Aorta (tissue), 5 donors: ENCODE measurements at regions of chr9 and their contacts with region 1.

Region 1: GRCh38 chr9:113463418-113464285 is at the start of gene RGS3:
- DNase-seq: peak; percentile 62 to 91
- ATAC-seq: peak; percentile 87
- H3K4me3 ChIP-seq: peak within 1 kb of the TSS; percentile 22 to 62
- H3K27ac ChIP-seq: peak within 1 kb of the TSS; percentile 69 to 73
- H3K4me1 ChIP-seq: no peaks in the 10 kb centered on the region
- H3K27me3 ChIP-seq: no peaks in the 10 kb centered on the region
- total RNA-seq, gene RGS3: 157 to 161 TPM

Region 2: DNA sequence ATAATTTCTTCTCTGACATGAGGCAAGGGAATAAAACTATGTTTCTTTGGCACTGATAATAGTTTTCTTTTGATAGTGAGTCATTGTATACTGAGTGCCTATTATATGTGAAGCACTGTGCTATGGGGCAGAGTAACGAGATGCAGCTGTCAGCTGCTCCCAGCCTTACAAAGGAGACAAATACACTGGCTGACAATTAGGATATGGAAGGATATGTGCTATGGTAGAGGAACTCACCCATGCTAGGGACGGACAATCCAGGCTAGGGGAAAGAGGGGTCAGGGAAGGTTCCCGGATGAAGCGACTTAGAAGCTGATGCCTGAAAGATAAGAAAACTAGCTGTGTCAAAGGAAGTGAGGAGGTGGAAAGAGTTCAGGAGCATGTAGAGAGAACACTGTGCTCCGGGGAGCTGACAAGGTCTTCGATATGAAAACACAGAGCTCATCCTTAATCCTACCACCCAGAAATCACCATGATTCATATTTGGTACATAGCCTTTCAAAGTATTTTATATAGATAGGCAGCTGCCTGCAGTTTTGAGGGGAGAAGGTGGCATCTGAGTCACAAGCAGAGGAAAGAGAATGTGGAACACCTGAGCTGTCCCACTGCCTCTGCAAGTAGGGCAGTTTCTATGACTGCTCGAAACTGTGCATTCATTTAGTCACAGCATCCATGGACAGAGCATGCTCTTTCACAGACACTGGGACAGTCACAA is 102.2 kb before region 1 on chr9:
- intact Hi-C with region 1: no loop called
- DNase-seq: no peak
- ATAC-seq: no peak
- H3K4me3 ChIP-seq: no peak overlapping the region
- H3K27ac ChIP-seq: no peak overlapping the region
- H3K4me1 ChIP-seq: no peaks in the 10 kb centered on the region
- H3K27me3 ChIP-seq: no peaks in the 10 kb centered on the region

Region 3: DNA sequence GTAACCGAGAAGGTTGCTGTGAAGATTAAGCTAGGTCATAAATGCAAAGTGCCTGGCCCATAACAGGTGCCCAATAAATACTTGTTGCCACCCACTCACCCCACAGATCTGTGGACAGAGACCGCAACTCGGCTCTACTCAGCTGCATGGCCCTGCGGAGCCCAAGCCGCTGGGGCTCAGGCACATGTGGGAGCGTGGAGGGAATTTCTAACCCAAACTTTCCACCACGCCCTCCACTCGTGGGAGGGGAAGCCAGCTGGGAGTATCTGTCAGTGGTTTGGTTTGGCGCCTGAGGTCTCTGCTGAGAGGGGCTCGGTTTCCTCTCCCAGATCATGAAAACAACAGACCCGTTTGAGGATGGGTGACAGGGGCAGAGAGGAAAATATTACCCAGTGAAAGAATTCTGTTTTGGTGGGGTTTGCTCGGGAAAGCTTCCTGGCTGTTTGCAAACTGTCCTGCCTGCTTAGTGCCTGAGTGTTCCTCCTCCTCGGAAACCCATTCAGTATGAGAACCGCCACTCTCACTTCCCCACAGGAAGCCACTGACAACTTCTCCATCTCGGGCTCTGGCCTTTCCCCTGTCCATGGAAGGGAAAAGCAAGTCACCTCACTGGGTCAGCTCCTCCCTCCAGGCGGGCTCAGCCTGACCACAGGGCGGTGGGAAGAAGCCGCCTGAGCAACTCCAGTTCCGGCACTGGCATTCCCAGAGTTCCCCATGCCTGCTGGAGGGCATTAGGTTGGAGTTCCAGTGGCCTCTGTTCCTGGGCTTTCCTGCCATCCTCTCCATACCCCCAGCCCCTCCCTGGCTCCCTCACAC is 60.0 kb after region 1 on chr9:
- intact Hi-C with region 1: loop called in 1 of 2 experiments (anchors 5 kb)
- DNase-seq: peak in 1 of 2 donors; percentile 84
- ATAC-seq: peak; percentile 22
- H3K4me3 ChIP-seq: no peak overlapping the region
- H3K27ac ChIP-seq: peak overlapping the region; percentile 20 to 68
- H3K4me1 ChIP-seq: peaks cover 2 to 11% of the 10 kb centered on the region in 2 donors
- H3K27me3 ChIP-seq: no peaks in the 10 kb centered on the region

Region 4: GRCh38 chr9:113581865-113582697 is 118.4 kb after region 1 on chr9:
- intact Hi-C with region 1: loop called in 1 of 2 experiments (anchors 5 kb)
- DNase-seq: peak; percentile 87 to 92
- ATAC-seq: peak; percentile 78
- H3K4me3 ChIP-seq: no peak overlapping the region
- H3K27ac ChIP-seq: peak overlapping the region; percentile 59 to 87
- H3K4me1 ChIP-seq: peaks cover 6 to 7% of the 10 kb centered on the region in 2 donors
- H3K27me3 ChIP-seq: no peaks in the 10 kb centered on the region